Activated T-helper 1 cell treated with anti-CD3 and anti-CD28 coated beads, Interleukin-12 subunit alpha, Interleukin-12 subunit beta, Interleukin-2, Interleukin-4 antibody, amounts not matched to agents 30 ng/mL and 10 ng/mL and 1 ng/mL, durations not matched to agents 14 hours and 24 hours and 36 hours (primary cell): ENCODE measurements at regions of chr12 and their contacts with region 1.

Region 1: DNA sequence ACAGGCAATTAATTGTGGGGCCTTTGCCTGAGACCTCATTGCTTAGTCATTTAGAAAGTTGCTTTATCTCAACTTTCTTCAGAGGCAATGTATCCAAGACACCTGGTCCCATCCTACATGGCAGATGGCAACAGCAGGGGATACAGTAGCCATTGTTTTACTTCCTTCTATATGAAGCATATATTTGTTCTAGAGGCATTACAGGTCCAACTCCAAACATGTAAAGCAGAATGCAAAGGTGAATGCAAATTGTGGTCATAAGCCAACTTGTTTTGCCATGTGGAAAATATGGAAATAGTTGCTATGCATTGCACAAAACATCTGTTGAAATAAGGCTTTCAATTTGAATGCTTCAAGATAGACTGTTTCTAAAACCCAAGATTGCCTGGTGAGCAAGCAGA is 109.8 kb upstream of the BCAT1 start:
- DNase-seq: no peak
- H3K4me3 Mint-ChIP-seq: no peak overlapping the region
- H3K27ac Mint-ChIP-seq: peak overlapping the region; percentile 18
- H3K4me1 Mint-ChIP-seq: peaks cover 78% of the 10 kb centered on the region
- H3K27me3 Mint-ChIP-seq: no peaks in the 10 kb centered on the region

Region 2: DNA sequence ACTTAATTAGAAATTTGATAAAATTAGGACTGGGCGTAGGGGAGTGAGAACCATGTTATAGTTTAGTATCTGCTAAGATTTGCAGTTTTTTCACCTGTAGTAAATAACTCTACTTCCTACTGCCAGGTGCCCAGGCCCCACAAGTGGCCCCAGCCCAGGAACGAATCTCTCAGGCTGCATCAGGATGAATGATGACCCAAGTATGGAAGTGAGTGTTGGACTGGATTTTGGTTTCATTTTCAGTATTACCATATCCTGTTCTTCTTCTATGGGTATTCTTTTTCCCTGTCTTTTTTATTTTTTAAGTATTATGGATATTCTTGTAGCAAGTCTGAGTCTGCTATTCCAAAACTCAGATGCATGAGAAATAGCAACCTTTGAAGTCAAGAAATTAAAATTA is 10.6 kb after region 1 on chr12:
- intact Hi-C with region 1: loop called (anchors 1 kb)
- DNase-seq: no peak
- H3K4me3 Mint-ChIP-seq: no peak overlapping the region
- H3K27ac Mint-ChIP-seq: no peak overlapping the region
- H3K4me1 Mint-ChIP-seq: peaks cover 28% of the 10 kb centered on the region
- H3K27me3 Mint-ChIP-seq: no peaks in the 10 kb centered on the region

Region 3: DNA sequence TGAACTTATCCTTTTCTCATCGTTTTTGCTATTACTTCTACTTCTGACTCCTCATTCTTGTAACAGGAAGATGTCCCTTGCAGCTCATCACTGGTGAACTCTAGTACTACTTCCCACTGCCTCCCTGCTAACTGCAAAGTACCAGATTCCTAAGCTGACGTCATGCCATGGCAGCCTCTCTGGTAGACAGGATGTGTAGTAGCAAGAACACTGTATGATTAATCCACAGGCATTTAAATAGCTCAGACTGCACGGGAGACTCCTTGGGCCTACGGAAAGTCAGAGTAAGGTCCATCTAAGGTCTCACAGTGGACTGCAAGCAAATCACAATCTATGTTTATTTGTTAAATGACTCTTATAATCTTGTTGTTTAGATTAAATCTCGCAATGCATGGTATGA is 92.8 kb after region 1 on chr12:
- intact Hi-C with region 1: no loop called
- DNase-seq: no peak
- H3K4me3 Mint-ChIP-seq: no peak overlapping the region
- H3K27ac Mint-ChIP-seq: no peak overlapping the region
- H3K4me1 Mint-ChIP-seq: peaks cover 7% of the 10 kb centered on the region
- H3K27me3 Mint-ChIP-seq: no peaks in the 10 kb centered on the region